ENCODE measurements at regions of chr12 and their contacts with region 1.

Region 1: DNA sequence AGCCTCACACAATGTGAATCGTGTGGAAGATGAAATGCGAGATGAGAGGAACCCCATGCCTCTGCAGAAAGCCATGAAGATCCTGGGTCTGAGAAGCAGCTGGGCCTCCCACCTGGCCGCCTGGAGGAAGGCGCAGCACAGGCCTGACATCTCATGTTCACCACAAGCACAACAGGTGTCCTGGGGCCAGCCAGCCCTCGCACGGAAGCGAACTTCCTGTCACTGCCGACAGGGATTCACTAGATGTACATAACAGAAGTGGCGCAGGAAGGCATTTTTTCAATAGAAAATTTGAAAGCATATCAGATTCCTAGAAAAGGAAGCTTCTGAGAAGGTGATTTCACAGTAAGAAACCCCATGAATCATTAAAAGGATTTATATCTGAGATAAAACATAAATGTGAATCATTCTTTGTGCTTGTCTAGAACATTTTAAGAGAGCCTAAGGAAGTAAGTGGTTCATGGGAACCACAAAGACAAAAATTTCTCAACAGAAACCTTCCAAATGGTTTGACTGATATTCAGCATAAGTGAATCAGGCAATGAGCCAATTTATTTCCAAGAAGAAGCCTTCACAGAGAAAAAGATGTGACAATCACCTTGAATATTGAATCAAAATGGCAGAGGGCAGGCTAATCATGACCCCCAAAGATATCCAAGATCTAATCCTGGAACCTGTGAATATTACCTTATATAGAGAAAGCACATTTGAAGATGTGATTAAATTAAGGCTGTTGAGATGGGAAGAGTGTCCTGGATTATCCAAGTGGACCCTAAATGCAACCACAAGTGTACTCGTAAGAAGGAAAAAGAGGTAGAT is 311.9 kb downstream of the DUSP6 start:
- ATAC-seq: no peak
- H3K4me3 ChIP-seq: no peak overlapping the region
- H3K27ac ChIP-seq: no peak overlapping the region
- H3K4me1 ChIP-seq: no peaks in the 10 kb centered on the region

Region 2: GRCh38 chr12:89461649-89462612 is 421.6 kb after region 1 on chr12:
- in situ Hi-C with region 1: loop called in 1 of 9 experiments (anchors 25 kb)
- ATAC-seq: peak; percentile 61 to 94 (median 84)
- H3K4me3 ChIP-seq: no peak overlapping the region
- H3K27ac ChIP-seq: no peak overlapping the region
- H3K4me1 ChIP-seq: peaks cover 0 to 7% of the 10 kb centered on the region in 2 donors